Activated naive CD4-positive, alpha-beta T cell treated with anti-CD3 and anti-CD28 coated beads for 36 hours (primary cell): ENCODE measurements at regions of chr3 and their contacts with region 1.

Region 1: DNA sequence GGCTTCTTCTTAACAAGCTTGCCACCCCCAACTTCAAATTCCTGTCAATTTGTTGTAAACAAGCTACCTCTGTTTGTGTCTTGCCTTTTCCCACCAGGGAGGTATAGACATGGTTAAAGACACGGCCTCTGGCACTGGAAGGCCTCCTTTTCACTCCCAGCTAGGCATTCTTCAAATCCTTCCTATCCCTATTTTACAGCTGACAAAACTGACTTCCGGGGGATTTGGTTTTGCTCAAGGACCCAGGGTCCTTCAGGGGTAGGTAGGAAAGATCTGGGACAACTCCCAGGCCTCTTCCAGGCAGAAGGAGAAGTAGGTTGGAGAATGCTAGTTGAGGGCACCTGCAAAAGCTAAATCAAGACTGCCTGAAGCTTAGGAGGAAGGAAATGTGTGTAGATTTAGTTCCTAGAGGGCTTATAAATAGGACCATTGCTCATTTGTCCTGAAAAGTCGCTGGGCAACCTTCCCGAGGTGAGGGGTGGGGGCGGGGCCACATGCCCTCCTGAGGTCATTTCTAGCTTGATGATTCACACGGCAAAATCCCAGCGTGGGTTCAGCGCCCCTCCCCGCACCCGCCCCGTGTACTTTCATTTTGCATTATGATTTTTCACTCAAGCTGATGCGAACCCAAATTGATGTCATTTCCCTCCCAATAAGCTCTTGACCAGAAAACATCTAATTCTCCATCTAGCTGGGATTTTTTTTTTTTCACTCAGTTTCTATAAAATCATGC is 365.5 kb downstream of the SHQ1 start:
- DNase-seq: peak; percentile 96
- H3K4me3 Mint-ChIP-seq: peak overlapping the region; percentile 4
- H3K27ac Mint-ChIP-seq: peak overlapping the region; percentile 88
- H3K4me1 Mint-ChIP-seq: peaks cover 68% of the 10 kb centered on the region
- H3K27me3 Mint-ChIP-seq: no peaks in the 10 kb centered on the region

Region 2: DNA sequence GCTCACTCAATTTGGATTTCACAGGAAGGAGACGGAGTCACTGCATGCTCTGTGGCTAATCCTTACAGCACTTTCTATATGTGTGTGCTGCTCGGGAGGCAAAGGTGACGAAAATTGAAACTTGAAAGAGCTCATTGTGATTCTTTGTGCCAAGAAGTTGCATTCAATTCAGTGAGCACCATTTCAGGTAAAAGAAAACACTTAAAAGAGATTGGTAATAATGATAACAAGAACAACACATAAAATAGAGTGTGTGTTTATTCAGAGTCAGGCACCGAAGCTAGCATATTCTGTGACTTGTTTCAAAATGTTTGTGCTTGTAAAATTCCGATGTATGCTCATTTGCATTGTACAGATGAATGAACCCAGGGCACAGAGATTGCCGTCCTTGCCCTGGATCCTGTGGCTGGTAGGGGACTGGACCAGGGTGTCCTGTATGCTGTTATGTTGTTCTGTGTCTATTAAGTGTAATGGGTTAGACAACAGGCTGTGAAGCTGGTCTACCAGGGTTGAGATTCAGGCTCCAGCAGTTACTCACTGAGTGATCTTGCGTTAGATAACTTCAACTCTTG is 504.5 kb before region 1 on chr3:
- CTCF ChIA-PET with region 1: no interaction called
- intact Hi-C with region 1: loop called (anchors 1 kb)
- DNase-seq: peak; percentile 76
- H3K4me3 Mint-ChIP-seq: no peak overlapping the region
- H3K27ac Mint-ChIP-seq: peak overlapping the region; percentile 82
- H3K4me1 Mint-ChIP-seq: peaks cover 33% of the 10 kb centered on the region
- H3K27me3 Mint-ChIP-seq: peaks cover 18% of the 10 kb centered on the region

Region 3: GRCh38 chr3:72259755-72260587 is 222.8 kb before region 1 on chr3:
- CTCF ChIA-PET with region 1: no interaction called
- intact Hi-C with region 1: loop called (anchors 2 kb)
- DNase-seq: peak; percentile 46
- H3K4me3 Mint-ChIP-seq: no peak overlapping the region
- H3K27ac Mint-ChIP-seq: peak overlapping the region; percentile 82
- H3K4me1 Mint-ChIP-seq: peaks cover 58% of the 10 kb centered on the region
- H3K27me3 Mint-ChIP-seq: no peaks in the 10 kb centered on the region

Region 4: DNA sequence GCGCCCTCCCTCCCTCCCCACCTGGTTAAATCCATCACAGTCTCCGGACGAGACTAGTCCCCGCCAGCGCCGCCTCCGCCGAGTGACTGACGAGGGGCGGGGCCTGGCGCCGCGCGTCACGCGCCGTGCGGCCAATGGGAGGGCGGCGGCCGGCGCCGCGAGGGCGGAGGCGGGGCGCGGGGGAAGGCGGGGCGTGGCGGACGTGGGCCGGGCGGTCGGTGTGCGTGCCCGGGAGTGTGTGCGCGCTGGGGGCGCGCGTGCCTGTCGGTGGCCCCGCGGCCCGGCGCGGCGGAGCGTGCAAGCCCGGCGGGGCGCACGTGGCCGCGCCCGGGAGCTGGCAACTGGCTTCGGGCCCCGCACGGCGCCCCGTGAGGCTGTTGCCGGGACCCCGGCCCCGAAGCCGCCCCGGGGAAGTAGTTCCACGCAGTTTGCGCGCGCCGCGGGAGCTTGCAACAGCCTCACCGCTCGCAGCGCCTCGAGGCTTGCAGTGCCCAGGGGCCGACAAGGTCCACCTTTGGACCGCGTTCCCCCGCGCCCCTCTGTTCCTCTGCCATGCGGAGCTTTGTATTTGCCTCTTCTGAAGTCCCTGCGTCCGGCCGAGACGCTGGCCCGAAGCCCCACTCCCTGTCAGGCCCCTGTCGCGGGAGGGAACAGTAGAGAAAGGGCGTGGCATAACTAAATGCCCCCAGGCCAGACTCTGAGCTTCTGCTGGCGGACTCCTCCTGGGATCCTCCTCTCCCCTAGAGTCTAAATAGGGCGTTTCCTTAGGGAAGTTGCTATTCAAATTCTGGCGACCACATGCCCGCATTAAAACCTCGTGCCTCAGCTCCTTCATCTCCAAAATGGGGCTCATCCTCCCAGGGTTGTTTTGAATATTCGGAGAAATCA is 35.5 kb before region 1 on chr3:
- CTCF ChIA-PET with region 1: interaction called, 3 read pairs
- intact Hi-C with region 1: loop called (anchors 1 kb)
- DNase-seq: peak; percentile 88
- H3K4me3 Mint-ChIP-seq: peak overlapping the region; percentile 54
- H3K27ac Mint-ChIP-seq: no peak overlapping the region
- H3K4me1 Mint-ChIP-seq: peaks cover 37% of the 10 kb centered on the region
- H3K27me3 Mint-ChIP-seq: peaks cover 12% of the 10 kb centered on the region

Region 5: DNA sequence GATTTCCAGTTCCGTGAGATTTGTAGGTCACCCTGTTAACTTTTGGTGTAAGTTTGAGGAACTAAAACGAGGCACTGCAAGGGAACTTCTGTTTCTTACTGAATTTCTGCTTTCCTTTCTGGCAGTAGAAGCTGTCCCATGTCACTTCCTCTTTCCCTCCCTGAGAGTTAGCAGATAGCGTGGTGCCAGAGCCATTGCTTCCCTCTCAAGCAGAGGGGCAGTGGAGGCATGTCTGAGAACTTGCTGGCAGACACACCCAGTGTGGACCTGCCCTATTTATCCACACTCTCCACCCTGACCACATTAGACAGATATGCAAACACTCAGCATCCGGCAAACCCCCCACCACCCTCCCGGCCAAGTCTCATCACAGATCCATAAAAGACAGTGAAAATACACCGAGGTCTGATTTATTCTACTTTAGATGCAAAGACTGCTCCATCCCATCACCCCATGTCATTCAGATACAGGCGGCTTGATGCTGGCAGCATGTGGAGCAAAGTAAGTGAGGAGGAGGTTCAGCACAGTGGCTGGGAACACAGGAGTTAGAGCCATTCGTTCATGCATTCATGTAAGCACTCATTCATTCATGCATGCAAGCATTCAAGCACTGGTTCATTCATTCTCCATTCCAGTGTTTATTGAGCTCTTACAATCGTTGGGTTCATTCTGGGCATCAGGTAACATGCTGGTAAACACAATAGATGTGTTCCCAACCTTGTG is 40.8 kb after region 1 on chr3:
- CTCF ChIA-PET with region 1: no interaction called
- intact Hi-C with region 1: loop called (anchors 1 kb)
- DNase-seq: peak; percentile 30
- H3K4me3 Mint-ChIP-seq: no peak overlapping the region
- H3K27ac Mint-ChIP-seq: no peak overlapping the region
- H3K4me1 Mint-ChIP-seq: peaks cover 44% of the 10 kb centered on the region
- H3K27me3 Mint-ChIP-seq: peaks cover 2% of the 10 kb centered on the region

Region 6: GRCh38 chr3:72756900-72757299 is 274.1 kb after region 1 on chr3:
- CTCF ChIA-PET with region 1: no interaction called
- intact Hi-C with region 1: loop called (anchors 2 kb)
- DNase-seq: peak; percentile 73
- H3K4me3 Mint-ChIP-seq: peak overlapping the region; percentile 17
- H3K27ac Mint-ChIP-seq: peak overlapping the region; percentile 83
- H3K4me1 Mint-ChIP-seq: peaks cover 74% of the 10 kb centered on the region
- H3K27me3 Mint-ChIP-seq: no peaks in the 10 kb centered on the region